ENCODE measurements at regions of chr10 and their contacts with region 1.

Region 1: DNA sequence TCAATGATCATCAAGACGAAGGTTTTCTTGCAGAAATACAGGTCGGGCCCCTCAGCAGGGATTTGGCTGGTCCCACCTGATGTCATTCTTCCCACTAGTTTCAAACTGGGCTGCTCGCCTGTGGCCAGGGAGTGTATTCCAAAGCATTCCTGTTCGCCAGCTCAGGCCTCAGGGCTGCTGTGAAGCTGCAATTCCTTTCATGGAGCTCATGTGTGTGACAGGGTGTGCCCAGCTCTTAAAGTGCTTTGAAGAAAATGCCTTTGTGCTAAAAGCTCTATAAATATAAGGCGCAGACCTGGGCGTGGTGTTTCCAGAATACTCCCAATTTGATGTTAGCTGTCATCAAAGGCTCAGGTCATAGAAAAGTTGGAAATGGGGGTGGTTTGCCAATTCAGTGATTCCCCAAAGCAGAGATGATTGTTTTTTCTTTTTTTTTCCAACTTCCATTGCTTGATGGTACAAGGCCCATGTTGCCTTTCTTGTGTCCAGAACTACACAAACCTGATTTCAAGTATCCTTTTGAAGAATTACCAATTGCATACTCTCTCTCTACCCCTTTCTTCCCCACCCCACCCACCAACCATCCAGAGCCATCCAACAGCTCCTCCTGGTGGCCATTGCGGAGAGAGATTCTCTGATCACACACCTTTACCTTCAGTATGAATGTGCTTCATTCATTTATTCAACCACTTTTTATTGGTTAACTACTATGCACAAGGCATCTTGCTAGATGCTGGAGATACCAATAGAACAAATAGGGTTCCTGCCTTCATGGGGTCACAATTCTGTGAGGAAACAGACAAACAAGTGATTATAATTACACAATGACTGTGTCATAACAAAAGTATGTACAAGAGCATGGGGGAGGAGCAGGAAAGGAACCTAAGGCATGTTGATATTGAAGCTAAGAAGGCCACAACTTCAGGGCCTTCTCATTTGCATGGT is 297.3 kb upstream of the LYZL1 start:
- DNase-seq: peak; percentile 51
- H3K4me3 ChIP-seq: no peak overlapping the region
- H3K27ac ChIP-seq: no peak overlapping the region
- H3K4me1 ChIP-seq: no peaks in the 10 kb centered on the region
- H3K27me3 ChIP-seq: peaks cover 0 to 4% of the 10 kb centered on the region in 2 experiments
- CTCF ChIP-seq: peak; percentile 70 to 80
- POLR2A ChIP-seq: no peak

Region 2: DNA sequence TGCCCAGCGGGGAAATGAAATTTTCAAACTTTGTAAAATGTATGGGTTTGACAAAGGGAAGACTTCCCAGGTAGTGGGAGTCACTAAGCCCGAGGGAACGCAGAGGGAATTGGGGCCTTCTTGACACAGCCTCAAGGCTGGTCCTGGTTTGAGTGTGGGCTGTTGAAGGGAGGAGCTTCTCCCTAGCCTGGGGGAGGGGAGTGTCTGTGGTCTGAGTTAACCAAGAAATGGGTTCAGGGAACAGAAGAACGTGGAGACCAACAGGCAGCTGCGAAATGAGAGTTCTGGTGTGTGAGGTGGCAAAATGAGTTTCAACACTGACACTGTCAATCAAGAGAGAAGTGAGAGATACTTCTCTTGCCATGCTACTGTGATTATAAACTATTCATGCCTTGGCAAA is 347.0 kb before region 1 on chr10:
- CTCF ChIA-PET with region 1: no interaction called
- POLR2A ChIA-PET with region 1: no interaction called
- dilution Hi-C with region 1: no loop called
- intact Hi-C with region 1: no loop called
- DNase-seq: no peak
- H3K4me3 ChIP-seq: no peak overlapping the region
- H3K27ac ChIP-seq: no peak overlapping the region
- H3K4me1 ChIP-seq: no peaks in the 10 kb centered on the region
- H3K27me3 ChIP-seq: peaks cover 0 to 2% of the 10 kb centered on the region in 2 experiments
- CTCF ChIP-seq: no peak
- POLR2A ChIP-seq: no peak

Region 3: GRCh38 chr10:28970231-28970630 is 21.4 kb before region 1 on chr10:
- CTCF ChIA-PET with region 1: interaction called, 13 read pairs
- POLR2A ChIA-PET with region 1: no interaction called
- dilution Hi-C with region 1: no loop called
- intact Hi-C with region 1: no loop called
- DNase-seq: peak; percentile 75
- H3K4me3 ChIP-seq: no peak overlapping the region
- H3K27ac ChIP-seq: no peak overlapping the region
- H3K4me1 ChIP-seq: peaks cover 10% of the 10 kb centered on the region
- H3K27me3 ChIP-seq: no peaks in the 10 kb centered on the region
- CTCF ChIP-seq: no peak
- POLR2A ChIP-seq: no peak

Region 4: GRCh38 chr10:29007748-29008610 is 16.4 kb after region 1 on chr10:
- CTCF ChIA-PET with region 1: no interaction called
- POLR2A ChIA-PET with region 1: no interaction called
- dilution Hi-C with region 1: no loop called
- intact Hi-C with region 1: no loop called
- DNase-seq: no peak
- H3K4me3 ChIP-seq: no peak overlapping the region
- H3K27ac ChIP-seq: no peak overlapping the region
- H3K4me1 ChIP-seq: no peaks in the 10 kb centered on the region
- H3K27me3 ChIP-seq: peaks cover 0 to 4% of the 10 kb centered on the region in 2 experiments
- CTCF ChIP-seq: no peak
- POLR2A ChIP-seq: no peak

Measured in endothelial cell of umbilical vein (primary cell).